PC-9 (cell line): ENCODE measurements at regions of chr9 and their contacts with region 1.

Region 1: GRCh38 chr9:83980395-83981125 is at the start of gene RMI1:
- DNase-seq: peak; percentile 91 to 97
- H3K4me3 ChIP-seq: peak within 1 kb of the TSS; percentile 98
- H3K27ac ChIP-seq: peak within 1 kb of the TSS; percentile 94
- H3K4me1 ChIP-seq: peaks cover 26% of the 10 kb centered on the region
- H3K27me3 ChIP-seq: no peaks in the 10 kb centered on the region
- CTCF ChIP-seq: no peak
- total RNA-seq, gene RMI1: 13.9 and 19.2 TPM in 2 replicates

Region 2: GRCh38 chr9:83956434-83957247 is 23.9 kb before region 1 on chr9:
- CTCF ChIA-PET with region 1: no interaction called
- POLR2A ChIA-PET with region 1: no interaction called
- intact Hi-C with region 1: loop called (anchors 2 kb)
- DNase-seq: peak; percentile 68 to 78
- H3K4me3 ChIP-seq: peak overlapping the region; percentile 69
- H3K27ac ChIP-seq: peak overlapping the region; percentile 50
- H3K4me1 ChIP-seq: peaks cover 32% of the 10 kb centered on the region
- H3K27me3 ChIP-seq: no peaks in the 10 kb centered on the region
- CTCF ChIP-seq: no peak

Region 3: GRCh38 chr9:84068864-84069263 is 88.3 kb after region 1 on chr9:
- CTCF ChIA-PET with region 1: no interaction called
- POLR2A ChIA-PET with region 1: no interaction called
- intact Hi-C with region 1: no loop called
- DNase-seq: no peak
- H3K4me3 ChIP-seq: no peak overlapping the region
- H3K27ac ChIP-seq: no peak overlapping the region
- H3K4me1 ChIP-seq: no peaks in the 10 kb centered on the region
- H3K27me3 ChIP-seq: no peaks in the 10 kb centered on the region
- CTCF ChIP-seq: no peak

Region 4: GRCh38 chr9:84170521-84171141 is 190.1 kb after region 1 on chr9:
- CTCF ChIA-PET with region 1: no interaction called
- POLR2A ChIA-PET with region 1: no interaction called
- intact Hi-C with region 1: loop called (anchors 1 kb)
- DNase-seq: peak in 1 of 2 experiments; percentile 67
- H3K4me3 ChIP-seq: no peak overlapping the region
- H3K27ac ChIP-seq: no peak overlapping the region
- H3K4me1 ChIP-seq: no peaks in the 10 kb centered on the region
- H3K27me3 ChIP-seq: no peaks in the 10 kb centered on the region
- CTCF ChIP-seq: no peak

Region 5: DNA sequence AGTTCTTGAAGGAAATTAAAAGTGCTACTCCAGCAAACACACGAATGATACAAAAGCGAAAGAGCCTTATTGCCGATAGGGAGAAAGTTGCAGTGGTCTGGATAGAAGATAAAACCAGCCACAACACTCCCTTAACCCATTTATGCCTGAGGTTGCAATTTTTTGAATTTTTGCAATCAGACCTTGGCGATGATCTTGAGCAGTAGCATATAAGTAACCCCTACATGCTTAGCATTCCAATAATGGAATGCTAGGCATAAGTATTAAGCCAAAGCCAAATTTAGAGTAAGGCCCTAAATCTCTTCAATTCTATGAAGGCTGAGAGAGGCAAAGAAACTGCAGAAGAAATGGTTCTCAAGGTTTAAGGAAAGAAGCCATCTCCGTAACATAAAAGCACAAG is 206.5 kb after region 1 on chr9:
- CTCF ChIA-PET with region 1: interaction called, 11 read pairs
- POLR2A ChIA-PET with region 1: interaction called, 11 read pairs
- intact Hi-C with region 1: loop called (anchors 2 kb)
- DNase-seq: no peak
- H3K4me3 ChIP-seq: no peak overlapping the region
- H3K27ac ChIP-seq: no peak overlapping the region
- H3K4me1 ChIP-seq: peaks cover 7% of the 10 kb centered on the region
- H3K27me3 ChIP-seq: no peaks in the 10 kb centered on the region
- CTCF ChIP-seq: no peak

Region 6: DNA sequence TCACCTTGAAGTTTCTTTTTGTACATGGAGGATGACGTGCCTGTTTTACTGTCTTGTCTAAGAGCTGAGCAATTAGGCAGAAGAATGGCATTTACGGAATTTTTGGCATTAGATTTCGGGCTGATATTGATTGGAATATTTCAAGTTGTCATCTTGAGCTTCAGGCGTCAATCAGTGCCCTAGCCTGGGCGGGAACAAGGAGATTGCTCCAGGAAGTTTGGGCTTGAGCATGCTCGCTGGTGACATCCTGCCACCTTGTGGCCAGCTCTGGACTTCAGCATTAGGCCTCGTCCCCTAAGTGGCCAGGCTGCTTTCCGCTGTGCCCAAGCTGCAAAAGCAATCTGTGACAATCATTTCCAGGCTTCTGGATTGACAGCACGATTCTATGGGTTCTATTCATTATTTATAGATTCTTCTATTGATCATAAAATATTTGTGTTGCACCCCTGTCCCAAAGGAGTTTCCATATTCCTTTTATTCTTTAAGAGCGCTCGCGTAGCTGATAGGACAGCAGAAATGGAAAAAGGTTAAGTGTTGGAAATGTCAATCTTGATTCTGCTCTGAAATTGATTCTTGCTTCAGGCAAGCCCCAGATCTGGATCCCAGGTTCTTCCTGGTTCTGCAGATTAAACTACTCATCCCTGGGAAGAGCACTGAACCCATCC is 280.7 kb after region 1 on chr9:
- CTCF ChIA-PET with region 1: no interaction called
- POLR2A ChIA-PET with region 1: interaction called, 3 read pairs
- intact Hi-C with region 1: loop called (anchors 5 kb)
- DNase-seq: peak; percentile 72 to 77
- H3K4me3 ChIP-seq: no peak overlapping the region
- H3K27ac ChIP-seq: no peak overlapping the region
- H3K4me1 ChIP-seq: 0 out of 2 replicates have a peak, but pooled peaks cover 3% of the 10 kb centered on the region
- H3K27me3 ChIP-seq: no peaks in the 10 kb centered on the region
- CTCF ChIP-seq: peak; percentile 90